ENCODE measurements at regions of chr1 and their contacts with region 1.

Region 1: GRCh38 chr1:54547601-54548388 is at the start of gene ACOT11:
- DNase-seq: peak; percentile 92
- ATAC-seq: peak; percentile 89
- total RNA-seq, gene ACOT11: 38.5 TPM

Region 2: GRCh38 chr1:54581621-54582035 is 33.8 kb after region 1 on chr1:
- intact Hi-C with region 1: loop called (anchors 5 kb)
- DNase-seq: peak; percentile 94
- ATAC-seq: peak; percentile 78